Activated naive CD4-positive, alpha-beta T cell treated with anti-CD3 and anti-CD28 coated beads for 36 hours (primary cell): ENCODE measurements at regions of chr17 and their contacts with region 1.

Region 1: DNA sequence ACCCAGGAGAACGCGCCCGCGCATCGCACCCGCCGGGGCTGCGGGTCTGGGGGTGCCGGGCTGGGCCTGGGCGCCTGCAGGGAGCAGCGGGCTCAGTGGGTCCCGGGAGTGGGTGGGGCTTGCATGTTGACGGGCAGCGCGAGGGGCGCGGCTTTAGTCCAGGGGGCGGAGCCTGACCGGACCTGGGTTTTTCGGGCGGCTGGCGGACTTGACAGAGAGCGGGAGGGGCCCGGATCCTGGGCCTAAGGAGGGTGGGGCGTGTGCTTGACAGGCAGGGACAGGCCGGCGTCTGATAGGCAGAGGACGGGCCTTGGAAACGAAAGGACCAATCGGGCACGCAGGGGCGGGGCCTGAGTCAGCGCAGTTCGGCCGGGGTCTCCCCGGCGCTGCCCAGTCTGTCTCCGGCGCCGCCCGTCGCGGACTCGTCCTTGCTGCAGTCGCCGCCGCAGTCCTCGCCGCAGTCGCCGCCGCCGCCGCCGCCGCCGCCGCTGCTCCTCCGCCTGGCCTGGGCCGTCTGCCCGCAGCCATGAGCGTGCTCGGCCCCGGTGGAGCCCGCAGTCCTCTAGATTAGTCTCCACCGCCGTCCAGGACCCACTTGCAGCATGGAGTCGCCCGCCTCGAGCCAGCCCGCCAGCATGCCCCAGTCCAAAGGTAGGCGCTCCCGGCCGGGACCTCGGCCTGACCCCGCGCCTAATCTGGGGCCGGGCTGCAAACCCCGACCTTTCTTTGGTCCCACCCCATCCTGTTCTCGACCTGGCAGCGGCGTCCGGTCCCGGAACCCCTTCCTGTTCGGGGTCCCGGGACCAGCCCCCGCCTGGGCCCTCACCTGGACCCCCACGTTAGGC is at the start of gene MAP2K3:
- DNase-seq: peak; percentile 97
- H3K4me3 Mint-ChIP-seq: peak within 1 kb of the TSS; percentile 100
- H3K27ac Mint-ChIP-seq: peak within 1 kb of the TSS; percentile 95
- H3K4me1 Mint-ChIP-seq: peaks cover 62% of the 10 kb centered on the region
- H3K27me3 Mint-ChIP-seq: no peaks in the 10 kb centered on the region
- total RNA-seq, gene MAP2K3: 87.0 to 87.2 TPM

Region 2: GRCh38 chr17:20800146-20800545 is 484.4 kb before region 1 on chr17:
- CTCF ChIA-PET with region 1: no interaction called
- intact Hi-C with region 1: loop called (anchors 10 kb)
- DNase-seq: no peak
- H3K4me3 Mint-ChIP-seq: no peak overlapping the region
- H3K27ac Mint-ChIP-seq: no peak overlapping the region
- H3K4me1 Mint-ChIP-seq: peaks cover 2% of the 10 kb centered on the region
- H3K27me3 Mint-ChIP-seq: peaks cover 4% of the 10 kb centered on the region

Region 3: GRCh38 chr17:21098934-21099689 is 185.4 kb before region 1 on chr17:
- CTCF ChIA-PET with region 1: no interaction called
- intact Hi-C with region 1: loop called (anchors 1 kb)
- DNase-seq: peak; percentile 91
- H3K4me3 Mint-ChIP-seq: peak overlapping the region; percentile 90
- H3K27ac Mint-ChIP-seq: peak overlapping the region; percentile 89
- H3K4me1 Mint-ChIP-seq: no peaks in the 10 kb centered on the region
- H3K27me3 Mint-ChIP-seq: no peaks in the 10 kb centered on the region

Region 4: GRCh38 chr17:21214015-21214776 is 70.3 kb before region 1 on chr17 and contains the start of gene TMEM11:
- CTCF ChIA-PET with region 1: no interaction called
- intact Hi-C with region 1: loop called (anchors 1 kb)
- DNase-seq: peak; percentile 95
- H3K4me3 Mint-ChIP-seq: peak within 1 kb of the TSS; percentile 91
- H3K27ac Mint-ChIP-seq: peak within 1 kb of the TSS; percentile 91
- H3K4me1 Mint-ChIP-seq: peaks cover 65% of the 10 kb centered on the region
- H3K27me3 Mint-ChIP-seq: no peaks in the 10 kb centered on the region
- total RNA-seq, gene TMEM11: 23.6 to 28.2 TPM

Region 5: DNA sequence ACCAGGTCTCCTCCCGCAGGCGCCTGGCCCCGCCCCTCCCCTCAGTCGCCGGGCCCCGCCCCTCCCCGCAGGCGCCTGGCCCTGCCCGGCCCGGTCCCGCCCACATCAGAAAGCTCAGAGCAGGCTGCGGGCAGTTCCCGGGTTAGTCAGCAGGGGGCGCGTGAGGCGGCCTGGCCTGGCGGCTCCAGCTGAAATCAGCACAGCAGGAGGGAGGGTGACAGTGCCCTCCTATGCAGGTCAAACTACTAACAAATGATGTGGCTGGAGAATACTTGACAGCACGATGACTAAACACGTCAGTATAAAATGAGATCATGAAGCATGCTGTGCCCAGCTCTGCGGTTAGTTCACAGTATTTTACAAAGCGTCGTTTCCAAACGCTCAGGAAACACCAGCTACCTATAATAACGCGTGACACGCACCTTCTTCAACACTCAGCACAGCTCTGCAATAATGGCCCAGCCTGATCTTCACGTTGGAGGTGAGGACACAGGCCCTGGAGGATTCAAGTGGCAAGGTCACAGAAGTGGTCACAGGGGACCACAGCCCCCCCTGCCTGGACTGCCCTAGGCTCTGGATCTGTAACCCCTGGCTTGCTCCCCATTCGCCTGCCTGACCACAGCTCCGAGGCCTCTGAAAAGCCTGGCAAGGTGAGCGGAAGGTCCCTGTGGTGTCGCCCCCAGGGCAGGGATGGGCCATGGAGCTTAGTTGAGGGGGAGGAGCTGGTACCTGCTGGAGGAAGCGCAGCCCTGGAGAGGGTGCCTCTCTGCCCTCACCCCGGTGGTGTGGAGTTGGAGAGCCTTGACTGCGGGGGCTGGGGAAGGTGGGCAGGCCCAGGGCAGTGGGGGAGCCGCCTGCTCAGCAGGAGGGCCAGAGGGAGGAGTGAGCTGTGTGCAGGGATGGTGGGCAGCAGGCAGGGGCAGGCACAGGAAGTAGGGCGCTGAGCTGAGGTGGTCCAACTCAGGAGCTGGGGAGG is 172.8 kb after region 1 on chr17:
- CTCF ChIA-PET with region 1: interaction called, 11 read pairs
- intact Hi-C with region 1: loop called (anchors 1 kb)
- DNase-seq: peak; percentile 96
- H3K4me3 Mint-ChIP-seq: no peak overlapping the region
- H3K27ac Mint-ChIP-seq: peak overlapping the region; percentile 53
- H3K4me1 Mint-ChIP-seq: peaks cover 22% of the 10 kb centered on the region
- H3K27me3 Mint-ChIP-seq: peaks cover 8% of the 10 kb centered on the region

Region 6: GRCh38 chr17:21551081-21551881 is 266.7 kb after region 1 on chr17:
- CTCF ChIA-PET with region 1: no interaction called
- intact Hi-C with region 1: loop called (anchors 1 kb)
- DNase-seq: peak; percentile 79
- H3K4me3 Mint-ChIP-seq: peak overlapping the region; percentile 91
- H3K27ac Mint-ChIP-seq: peak overlapping the region; percentile 88
- H3K4me1 Mint-ChIP-seq: peaks cover 29% of the 10 kb centered on the region
- H3K27me3 Mint-ChIP-seq: peaks cover 11% of the 10 kb centered on the region